ENCODE measurements at regions of chr12 and their contacts with region 1.

Region 1: DNA sequence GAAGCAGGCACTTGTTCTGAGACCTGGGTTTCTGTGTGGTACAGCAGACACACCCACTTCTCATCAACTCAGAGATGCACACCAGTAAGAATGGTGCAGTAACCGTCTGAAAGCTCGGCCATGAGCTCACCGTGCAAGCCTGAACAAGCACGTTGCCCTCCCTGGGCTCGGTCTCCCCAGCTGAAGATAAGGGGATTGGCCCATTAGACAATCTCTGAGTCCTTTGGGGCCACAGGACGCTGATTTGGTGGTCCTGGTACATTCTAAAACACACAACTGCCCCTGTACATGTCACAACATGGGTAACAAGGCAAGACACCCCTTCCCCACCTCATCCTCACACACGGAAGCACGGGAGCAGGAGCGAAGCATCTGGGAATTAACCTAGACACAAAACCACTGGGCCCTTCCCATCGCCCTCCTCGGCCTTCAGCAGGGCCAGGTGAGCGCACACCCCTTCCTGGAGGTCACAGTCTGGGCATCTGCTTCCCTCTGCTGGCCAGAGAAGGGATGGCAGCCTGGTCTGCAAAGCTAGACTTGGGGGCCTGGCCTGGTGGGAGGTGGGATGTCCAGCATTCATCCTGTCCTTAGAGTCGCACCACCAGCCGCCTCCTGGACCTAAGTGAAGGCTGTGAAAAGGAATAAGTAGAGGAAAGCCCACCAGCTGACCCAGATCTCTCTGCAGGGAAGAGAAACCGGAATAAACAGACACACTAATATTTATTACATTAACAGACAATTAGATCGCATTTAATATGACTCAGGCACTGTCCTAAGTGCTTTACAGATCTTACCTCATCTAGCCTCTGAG is 18.9 kb upstream of the SMUG1 start:
- DNase-seq: peak; percentile 73
- H3K4me3 ChIP-seq: no peak overlapping the region
- H3K27ac ChIP-seq: no peak overlapping the region
- H3K4me1 ChIP-seq: no peaks in the 10 kb centered on the region
- H3K27me3 ChIP-seq: no peaks in the 10 kb centered on the region
- CTCF ChIP-seq: peak; percentile 97

Region 2: GRCh38 chr12:54229624-54230212 is 22.0 kb after region 1 on chr12:
- CTCF ChIA-PET with region 1: no interaction called
- POLR2A ChIA-PET with region 1: interaction called, 17 read pairs
- intact Hi-C with region 1: no loop called
- DNase-seq: peak; percentile 80
- H3K4me3 ChIP-seq: no peak overlapping the region
- H3K27ac ChIP-seq: peak overlapping the region; percentile 15
- H3K4me1 ChIP-seq: peaks cover 4% of the 10 kb centered on the region
- H3K27me3 ChIP-seq: no peaks in the 10 kb centered on the region
- CTCF ChIP-seq: no peak

Measured in A673 (cell line).